Activated naive CD4-positive, alpha-beta T cell treated with anti-CD3 and anti-CD28 coated beads for 36 hours (primary cell): ENCODE measurements at regions of chr5 and their contacts with region 1.

Region 1: DNA sequence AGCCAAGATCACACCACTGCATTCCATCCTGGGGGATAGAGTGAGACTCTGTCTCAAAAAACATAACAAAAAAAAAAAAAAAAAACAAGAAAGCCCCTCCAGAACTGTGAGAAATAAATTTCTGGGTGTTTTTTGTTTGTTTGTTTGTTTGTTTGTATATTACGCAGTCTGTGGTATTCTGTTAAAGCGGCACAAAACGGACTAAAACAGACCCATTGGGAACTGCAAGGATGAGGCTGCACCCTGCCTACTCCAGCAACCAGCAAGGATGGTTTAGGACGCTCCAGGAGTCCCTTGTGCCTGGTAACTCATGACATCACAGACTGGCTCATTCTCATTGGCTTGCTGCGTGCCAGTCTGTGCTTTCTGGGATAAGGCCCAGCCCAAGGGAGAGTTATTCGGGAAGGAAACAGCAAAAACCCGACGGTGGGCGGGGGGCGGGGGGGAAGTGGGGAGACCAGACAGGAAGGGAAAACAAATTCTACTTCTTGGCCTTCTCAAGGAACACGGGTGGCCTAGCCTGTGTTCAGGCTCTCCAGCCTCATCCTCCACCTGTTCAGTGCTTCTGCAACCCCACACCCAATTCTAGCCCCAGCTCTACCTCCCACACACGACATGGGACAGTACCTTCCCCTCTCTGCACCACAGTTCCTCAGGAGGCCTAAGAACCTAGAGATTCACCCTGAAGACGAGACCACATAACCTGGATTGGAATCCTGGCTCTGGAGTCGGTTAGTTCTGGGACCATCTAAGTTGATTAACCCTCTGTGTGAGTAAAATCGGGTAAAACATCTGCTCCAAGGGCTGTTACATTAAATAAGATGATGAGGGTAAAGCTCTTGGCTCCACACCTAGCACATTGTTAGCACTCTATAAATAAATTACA is 2.8 kb downstream of the CD74 start:
- DNase-seq: peak; percentile 70
- H3K4me3 Mint-ChIP-seq: peak overlapping the region; percentile 98
- H3K27ac Mint-ChIP-seq: peak overlapping the region; percentile 98
- H3K4me1 Mint-ChIP-seq: peaks cover 39% of the 10 kb centered on the region
- H3K27me3 Mint-ChIP-seq: no peaks in the 10 kb centered on the region

Region 2: DNA sequence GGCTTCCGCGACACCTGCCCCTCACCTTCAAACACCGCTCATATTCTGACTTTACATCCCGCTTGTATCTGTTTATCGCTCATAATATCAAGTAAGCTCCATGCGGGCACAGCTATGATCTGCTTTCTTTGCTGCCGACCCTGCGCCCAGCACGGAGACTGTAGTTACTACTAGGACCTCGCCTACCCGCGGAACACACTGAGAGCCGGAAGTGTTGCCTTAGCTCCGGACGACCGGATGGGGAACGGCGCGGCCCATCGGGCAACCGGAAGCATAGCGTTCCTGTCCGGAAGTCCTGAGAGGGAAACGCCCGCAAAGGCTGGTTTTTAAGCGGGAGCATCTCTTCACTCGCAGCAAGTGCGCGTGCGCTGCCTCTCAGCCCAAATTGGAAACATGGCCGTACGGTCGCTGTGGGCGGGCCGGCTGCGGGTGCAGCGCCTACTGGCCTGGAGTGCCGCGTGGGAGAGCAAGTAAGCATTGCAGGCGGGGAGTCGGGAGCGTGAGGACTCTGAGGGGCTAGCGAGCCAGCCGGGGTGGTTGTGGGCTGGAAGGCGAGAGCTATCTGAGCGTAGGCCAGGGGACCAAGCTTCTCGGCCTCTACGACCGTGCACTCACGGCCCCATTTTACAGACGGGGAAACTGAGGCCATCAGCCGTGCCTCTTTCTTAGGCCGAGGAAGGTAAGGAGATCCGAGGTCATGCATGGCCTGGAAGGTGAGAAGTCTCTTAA is 1064.6 kb before region 1 on chr5 and contains the start of gene GRPEL2:
- CTCF ChIA-PET with region 1: no interaction called
- intact Hi-C with region 1: loop called (anchors 5 kb)
- DNase-seq: peak; percentile 97
- H3K4me3 Mint-ChIP-seq: peak within 1 kb of the TSS; percentile 91
- H3K27ac Mint-ChIP-seq: peak within 1 kb of the TSS; percentile 95
- H3K4me1 Mint-ChIP-seq: peaks cover 52% of the 10 kb centered on the region
- H3K27me3 Mint-ChIP-seq: no peaks in the 10 kb centered on the region
- total RNA-seq, gene GRPEL2: 44.7 to 49.6 TPM

Region 3: GRCh38 chr5:150000256-150000989 is 409.5 kb before region 1 on chr5 and contains the starts of genes HMGXB3 and TIGD6:
- CTCF ChIA-PET with region 1: no interaction called
- intact Hi-C with region 1: loop called (anchors 1 kb)
- DNase-seq: peak; percentile 91
- H3K4me3 Mint-ChIP-seq: peak within 1 kb of the TSS; percentile 86
- H3K27ac Mint-ChIP-seq: peak within 1 kb of the TSS; percentile 85
- H3K4me1 Mint-ChIP-seq: peaks cover 39% of the 10 kb centered on the region
- H3K27me3 Mint-ChIP-seq: no peaks in the 10 kb centered on the region
- total RNA-seq, gene HMGXB3: 24.3 to 26.8 TPM
- total RNA-seq, gene TIGD6: 2.6 to 2.7 TPM

Region 4: DNA sequence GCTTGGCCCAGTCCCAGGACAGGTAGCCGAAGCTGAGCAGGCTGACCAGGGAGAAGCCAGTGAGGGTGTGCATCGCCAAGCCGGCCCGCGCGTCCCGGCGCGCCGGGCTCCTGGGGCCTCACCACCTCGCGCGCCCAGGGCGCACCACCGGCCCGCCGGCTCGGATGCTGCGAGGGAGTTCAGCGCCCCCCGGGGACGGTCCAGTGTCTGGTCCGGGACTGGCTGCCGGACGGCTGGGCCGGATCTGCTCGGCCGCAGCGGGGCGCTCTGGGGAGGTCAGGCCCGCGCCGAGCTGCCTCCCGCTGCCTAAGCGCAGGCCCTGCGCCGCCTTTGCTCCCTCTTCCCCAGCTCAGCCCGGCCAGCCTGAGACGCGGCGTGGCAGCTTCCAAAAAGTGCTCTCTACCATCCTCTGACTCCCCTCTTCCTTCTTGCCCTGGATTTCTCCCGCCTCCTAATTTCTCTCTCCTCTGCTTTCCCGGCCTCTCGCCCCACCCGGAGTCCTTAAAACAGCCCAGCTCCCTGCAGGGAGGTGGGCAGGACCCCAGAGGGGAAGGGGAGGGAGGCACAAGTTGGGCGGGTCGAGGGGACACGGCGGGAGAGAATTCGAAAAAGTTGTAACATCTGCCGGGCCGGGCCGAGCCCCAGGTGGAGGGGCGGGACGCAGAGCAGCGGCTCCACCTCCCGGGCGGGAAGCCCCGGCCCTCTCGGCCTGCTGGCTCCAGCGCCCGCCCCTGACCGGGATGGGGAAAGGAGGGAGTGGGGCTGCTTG is 107.4 kb before region 1 on chr5 and contains the start of gene ARSI:
- CTCF ChIA-PET with region 1: no interaction called
- intact Hi-C with region 1: no loop called
- DNase-seq: no peak
- H3K4me3 Mint-ChIP-seq: no peak within 1 kb of the TSS
- H3K27ac Mint-ChIP-seq: no peak within 1 kb of the TSS
- H3K4me1 Mint-ChIP-seq: peaks cover 2% of the 10 kb centered on the region
- H3K27me3 Mint-ChIP-seq: peaks cover 28% of the 10 kb centered on the region
- total RNA-seq, gene ARSI: not detected

Region 5: DNA sequence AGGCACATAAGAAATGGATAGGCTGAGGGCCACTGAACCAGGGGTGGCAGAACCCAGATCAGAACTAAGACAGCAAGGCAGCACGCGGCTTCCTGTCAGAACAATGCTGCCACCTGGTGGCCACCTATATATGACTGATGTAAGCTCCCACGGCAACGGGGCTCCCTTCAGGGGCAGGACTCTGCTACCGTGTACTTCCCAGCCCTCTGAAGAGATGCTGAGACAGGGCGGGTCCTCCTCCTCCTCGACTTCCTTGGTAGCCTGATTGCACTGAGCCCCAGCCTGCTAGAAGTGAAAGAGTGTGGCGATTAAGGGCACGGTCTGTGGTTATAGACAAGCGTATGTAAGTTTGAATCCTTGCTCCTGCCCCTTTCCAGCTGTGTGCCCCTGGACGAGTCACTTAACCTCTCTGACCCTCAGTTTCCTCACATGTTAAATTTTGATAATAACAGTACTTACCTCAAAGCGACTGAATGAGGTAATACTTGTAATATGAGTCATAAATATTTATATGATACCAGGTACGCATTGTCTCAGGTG is 26.3 kb after region 1 on chr5:
- CTCF ChIA-PET with region 1: interaction called, 33 read pairs
- intact Hi-C with region 1: loop called (anchors 1 kb)
- DNase-seq: peak; percentile 95
- H3K4me3 Mint-ChIP-seq: no peak overlapping the region
- H3K27ac Mint-ChIP-seq: no peak overlapping the region
- H3K4me1 Mint-ChIP-seq: peaks cover 8% of the 10 kb centered on the region
- H3K27me3 Mint-ChIP-seq: no peaks in the 10 kb centered on the region

Region 6: DNA sequence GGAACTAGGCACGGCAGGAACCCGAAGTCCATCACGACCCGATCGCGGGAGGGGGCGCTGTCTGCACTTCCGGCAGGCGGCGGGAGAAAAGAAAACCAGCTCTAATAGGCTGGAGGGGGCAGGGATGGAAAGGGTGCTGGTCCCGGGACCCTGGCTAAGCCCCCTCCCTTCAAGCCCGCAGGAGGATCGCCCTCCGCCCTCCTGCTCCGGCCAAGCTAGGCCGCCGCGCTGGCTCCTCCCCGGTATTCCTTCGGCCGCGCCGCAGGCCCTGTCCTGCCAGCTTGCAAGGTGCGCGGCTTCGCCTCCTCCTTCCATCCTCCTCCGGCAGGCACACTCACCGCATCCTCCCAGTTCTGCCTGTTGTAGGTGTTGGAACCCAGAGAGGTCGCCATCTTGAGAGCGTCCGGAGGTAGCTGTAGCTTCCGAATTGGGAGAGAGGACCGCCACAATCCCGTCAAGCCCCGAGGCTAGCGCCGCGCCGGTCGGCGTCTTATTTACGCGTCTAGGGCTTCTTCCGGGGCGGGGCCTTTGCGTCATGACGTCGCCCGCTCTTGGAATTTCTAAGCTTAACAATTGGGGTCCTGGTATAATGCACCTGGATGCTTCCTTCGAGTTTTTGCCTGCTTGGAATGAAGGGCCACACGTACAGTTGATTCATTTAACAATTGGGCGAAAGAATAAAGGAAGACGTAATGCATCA is 290.9 kb after region 1 on chr5 and contains the start of gene RBM22:
- CTCF ChIA-PET with region 1: no interaction called
- intact Hi-C with region 1: loop called (anchors 1 kb)
- DNase-seq: peak; percentile 95
- H3K4me3 Mint-ChIP-seq: no peak within 1 kb of the TSS
- H3K27ac Mint-ChIP-seq: no peak within 1 kb of the TSS
- H3K4me1 Mint-ChIP-seq: peaks cover 8% of the 10 kb centered on the region
- H3K27me3 Mint-ChIP-seq: no peaks in the 10 kb centered on the region
- total RNA-seq, gene RBM22: 86.2 to 88.2 TPM

Region 7: DNA sequence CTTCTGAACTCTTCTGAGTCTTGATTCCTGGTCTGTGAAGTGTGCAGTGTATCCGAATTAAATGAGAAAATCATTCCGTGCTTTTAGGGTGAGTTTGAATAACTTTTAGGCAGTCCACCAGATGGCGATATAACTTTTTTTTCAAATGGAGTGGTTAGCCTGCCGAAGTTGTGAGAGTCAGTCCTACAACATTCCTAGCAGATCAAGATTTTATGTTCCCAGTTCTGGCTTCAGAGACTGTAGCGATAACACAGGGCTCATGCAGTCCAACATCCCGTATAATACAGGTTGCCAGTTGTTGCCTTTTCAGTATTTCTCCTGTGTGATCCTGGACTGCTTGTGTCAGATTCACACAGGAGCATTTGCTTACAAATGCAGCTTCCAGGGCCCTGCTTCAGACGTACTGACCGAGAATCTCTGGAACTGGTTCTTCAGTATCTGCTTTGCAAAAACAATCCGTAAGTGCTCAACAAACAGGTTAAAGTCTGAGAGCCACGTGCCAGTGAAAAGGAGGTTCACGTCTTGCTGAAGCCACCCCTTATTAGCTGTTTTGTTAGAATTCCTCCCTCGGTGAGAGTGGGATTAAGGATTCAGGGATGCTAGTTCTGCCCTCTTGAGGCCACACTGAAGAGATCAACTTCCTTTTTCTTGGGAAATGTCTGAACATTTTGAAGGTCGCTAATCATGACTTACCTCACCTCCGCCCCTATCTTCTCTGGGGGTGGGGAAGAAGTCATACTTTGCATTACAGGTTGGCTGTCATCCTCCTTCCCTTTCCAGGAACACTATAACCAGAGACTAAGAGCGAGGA is 391.4 kb after region 1 on chr5:
- CTCF ChIA-PET with region 1: no interaction called
- intact Hi-C with region 1: no loop called
- DNase-seq: peak; percentile 31
- H3K4me3 Mint-ChIP-seq: no peak overlapping the region
- H3K27ac Mint-ChIP-seq: no peak overlapping the region
- H3K4me1 Mint-ChIP-seq: peaks cover 31% of the 10 kb centered on the region
- H3K27me3 Mint-ChIP-seq: no peaks in the 10 kb centered on the region

Region 8: DNA sequence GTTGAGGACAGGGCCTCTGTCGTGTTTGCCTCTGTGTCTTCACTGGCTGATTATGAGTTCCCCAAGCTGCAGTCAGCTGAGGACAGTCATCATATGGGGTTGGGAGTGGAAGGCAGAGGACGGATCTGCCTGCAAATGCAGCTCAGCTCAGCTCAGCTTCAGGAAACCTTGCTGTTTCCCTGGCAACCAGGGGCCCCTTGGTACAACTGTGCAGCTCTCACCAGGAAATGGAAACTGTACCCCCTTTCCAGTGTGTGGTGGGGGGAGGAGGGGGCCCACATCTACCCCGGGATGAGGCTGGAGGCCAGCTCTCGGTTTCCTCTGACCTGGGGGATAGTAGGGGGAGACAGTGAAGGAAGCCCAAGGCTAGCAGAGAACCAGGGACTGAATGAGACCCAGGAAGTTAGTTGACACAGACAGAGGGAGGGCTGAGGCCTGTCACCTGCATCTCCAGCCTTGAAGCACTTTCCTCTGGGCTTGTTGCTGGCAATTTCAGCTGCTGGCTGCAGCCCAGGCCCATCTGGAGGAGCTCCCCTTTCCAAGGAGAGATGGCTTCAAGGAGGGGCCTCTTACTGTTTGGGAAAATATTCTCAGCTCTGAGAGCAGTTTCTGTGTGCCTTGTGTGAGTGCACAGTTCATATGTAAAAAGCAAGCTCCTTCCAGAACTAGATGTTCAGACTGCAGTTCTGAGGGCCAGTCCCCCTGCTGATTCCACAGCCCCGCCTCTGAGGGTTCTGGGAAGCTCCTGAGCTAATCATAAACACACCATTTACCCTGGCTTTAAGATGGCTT is 740.8 kb after region 1 on chr5:
- CTCF ChIA-PET with region 1: no interaction called
- intact Hi-C with region 1: loop called (anchors 1 kb)
- DNase-seq: peak; percentile 91
- H3K4me3 Mint-ChIP-seq: peak overlapping the region; percentile 64
- H3K27ac Mint-ChIP-seq: peak overlapping the region; percentile 90
- H3K4me1 Mint-ChIP-seq: peaks cover 94% of the 10 kb centered on the region
- H3K27me3 Mint-ChIP-seq: no peaks in the 10 kb centered on the region

Region 9: DNA sequence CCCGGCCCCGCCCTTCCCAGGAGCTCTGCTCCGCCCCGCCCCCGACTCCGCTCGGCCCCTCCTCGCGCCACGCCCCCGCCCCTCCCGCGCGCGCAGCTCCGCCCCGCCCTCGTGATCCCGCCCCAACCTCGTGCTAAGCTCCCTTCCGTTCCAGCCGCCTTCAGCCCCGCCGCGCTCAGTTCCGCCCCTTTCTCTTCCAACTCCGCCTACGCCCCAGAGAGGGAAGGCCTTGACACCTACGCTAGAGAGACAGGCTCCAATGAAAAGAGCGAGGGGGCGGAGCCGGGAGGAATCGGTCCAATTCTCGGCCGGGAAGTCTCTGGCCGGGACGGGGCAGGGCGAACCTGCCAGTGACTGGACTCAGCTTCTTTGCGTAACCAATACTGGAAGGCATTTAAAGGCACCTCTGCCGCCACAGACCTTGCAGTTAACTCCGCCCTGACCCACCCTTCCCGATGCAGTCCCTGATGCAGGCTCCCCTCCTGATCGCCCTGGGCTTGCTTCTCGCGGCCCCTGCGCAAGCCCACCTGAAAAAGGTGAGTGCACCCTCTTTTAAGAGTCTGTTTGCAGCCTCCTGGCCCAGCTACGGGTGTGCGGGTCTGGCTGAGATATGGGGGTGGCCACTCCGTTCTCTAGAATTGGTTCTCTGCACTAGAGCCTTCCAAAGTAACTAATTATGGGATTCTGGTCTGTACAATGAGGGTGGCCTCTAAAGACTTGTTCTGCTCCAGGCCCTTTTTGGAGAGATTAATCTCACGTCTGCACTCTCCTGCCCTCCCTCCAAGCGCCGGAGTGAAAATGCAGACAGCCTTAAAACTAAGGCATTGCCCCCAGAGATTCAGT is 843.1 kb after region 1 on chr5 and contains the start of gene GM2A:
- CTCF ChIA-PET with region 1: no interaction called
- intact Hi-C with region 1: loop called (anchors 2 kb)
- DNase-seq: peak; percentile 99
- H3K4me3 Mint-ChIP-seq: peak within 1 kb of the TSS; percentile 89
- H3K27ac Mint-ChIP-seq: peak within 1 kb of the TSS; percentile 90
- H3K4me1 Mint-ChIP-seq: peaks cover 43% of the 10 kb centered on the region
- H3K27me3 Mint-ChIP-seq: no peaks in the 10 kb centered on the region
- total RNA-seq, gene GM2A: 21.1 to 21.8 TPM